ENCODE measurements at regions of chr17 and their contacts with region 1.

Region 1: GRCh38 chr17:66255112-66255511 is 25.9 kb upstream of the APOH start:
- DNase-seq: peak in 1 of 2 donors; percentile 29
- ATAC-seq: peak; percentile 73 to 85
- H3K4me3 ChIP-seq: no peak overlapping the region
- H3K27ac ChIP-seq: no peak overlapping the region
- H3K4me1 ChIP-seq: no peaks in the 10 kb centered on the region
- H3K27me3 ChIP-seq: no peaks in the 10 kb centered on the region
- CTCF ChIP-seq: peak; percentile 26 to 70 (median 64)
- POLR2A ChIP-seq: no peak

Region 2: GRCh38 chr17:66567234-66568170 is 312.4 kb after region 1 on chr17:
- in situ Hi-C with region 1: loop called (anchors 10 kb)
- intact Hi-C with region 1: loop called (anchors 1 kb)
- DNase-seq: peak; percentile 32 to 62
- ATAC-seq: peak; percentile 81 to 85
- H3K4me3 ChIP-seq: no peak overlapping the region
- H3K27ac ChIP-seq: no peak overlapping the region
- H3K4me1 ChIP-seq: no peaks in the 10 kb centered on the region
- H3K27me3 ChIP-seq: no peaks in the 10 kb centered on the region
- CTCF ChIP-seq: peak; percentile 43 to 82 (median 78)
- POLR2A ChIP-seq: no peak

Region 3: GRCh38 chr17:66619206-66619605 is 364.1 kb after region 1 on chr17:
- in situ Hi-C with region 1: no loop called
- intact Hi-C with region 1: loop called (anchors 5 kb)
- DNase-seq: no peak
- ATAC-seq: no peak
- H3K4me3 ChIP-seq: no peak overlapping the region
- H3K27ac ChIP-seq: no peak overlapping the region
- H3K4me1 ChIP-seq: no peaks in the 10 kb centered on the region
- H3K27me3 ChIP-seq: no peaks in the 10 kb centered on the region
- CTCF ChIP-seq: no peak
- POLR2A ChIP-seq: no peak